GM12878 (cell line): ENCODE measurements at regions of chr15 and their contacts with region 1.

Region 1: GRCh38 chr15:55649054-55649423 is 60.9 kb upstream of the PYGO1 start:
- DNase-seq: no peak
- ATAC-seq: no peak
- H3K4me3 ChIP-seq: no peak overlapping the region
- H3K27ac ChIP-seq: no peak overlapping the region
- H3K4me1 ChIP-seq: no peaks in the 10 kb centered on the region
- H3K27me3 ChIP-seq: no peaks in the 10 kb centered on the region
- CTCF ChIP-seq: no peak
- EP300 ChIP-seq: no peak
- POLR2A ChIP-seq: no peak
- RAD21 ChIP-seq: no peak

Region 2: DNA sequence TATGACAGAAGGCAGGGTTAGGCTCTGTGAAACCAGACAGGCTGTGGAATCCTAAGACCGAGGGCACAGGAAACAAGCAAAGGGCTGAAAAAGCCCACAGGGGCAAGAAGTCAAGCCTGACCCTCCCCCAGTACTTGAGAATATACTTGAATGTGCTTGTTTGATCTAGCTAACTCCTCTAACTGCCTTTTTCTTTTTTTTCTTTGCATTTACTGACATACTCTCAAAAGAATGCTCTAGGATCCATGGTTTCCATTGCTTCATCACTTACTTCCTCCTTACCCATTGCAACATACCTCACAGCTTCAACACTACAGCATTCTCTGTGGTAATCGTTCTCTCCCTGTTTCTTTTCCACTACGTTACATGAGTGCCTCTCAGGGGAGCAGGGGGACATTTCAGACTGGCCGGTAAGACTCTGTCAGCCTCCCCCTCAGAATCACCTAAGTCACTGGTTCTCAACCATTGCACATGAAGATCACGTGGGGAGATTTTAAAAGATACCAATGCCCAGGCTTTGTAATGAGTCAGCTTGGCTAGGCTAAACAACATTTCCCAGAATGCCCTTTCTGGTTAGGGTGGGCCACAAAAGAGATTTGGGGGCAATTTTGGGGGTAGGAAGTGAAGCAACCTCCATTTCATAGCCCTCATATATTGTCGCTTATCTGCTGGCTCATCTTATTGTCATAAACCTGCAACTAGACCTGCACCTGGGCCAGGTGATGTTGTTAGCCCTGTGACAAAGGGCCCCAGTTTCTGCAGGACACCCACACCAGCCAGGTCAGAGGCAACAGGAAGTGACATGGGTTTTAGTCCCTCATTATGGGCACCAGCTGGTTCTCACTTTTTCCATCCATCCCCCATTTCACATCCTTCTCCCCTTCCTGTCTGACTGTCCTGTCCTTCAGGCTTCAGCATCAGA is 427.7 kb before region 1 on chr15:
- CTCF ChIA-PET with region 1: no interaction called
- POLR2A ChIA-PET with region 1: no interaction called
- RAD21 ChIA-PET with region 1: no interaction called
- SMC1A ChIA-PET with region 1: no interaction called
- in situ Hi-C with region 1: loop called (anchors 10 kb)
- intact Hi-C with region 1: no loop called
- DNase-seq: peak; percentile 52
- ATAC-seq: peak; percentile 71
- H3K4me3 ChIP-seq: no peak overlapping the region
- H3K27ac ChIP-seq: no peak overlapping the region; the same call in 1 of the 2 replicates
- H3K4me1 ChIP-seq: peaks cover 33% of the 10 kb centered on the region
- H3K27me3 ChIP-seq: no peaks in the 10 kb centered on the region
- CTCF ChIP-seq: no peak
- EP300 ChIP-seq: 0 out of 4 replicates have a peak, but pooled peaks of 1 of the 2 experiments have one; percentile 22
- POLR2A ChIP-seq: no peak
- RAD21 ChIP-seq: 0 out of 2 replicates have a peak, but pooled peaks have one; percentile 2

Region 3: DNA sequence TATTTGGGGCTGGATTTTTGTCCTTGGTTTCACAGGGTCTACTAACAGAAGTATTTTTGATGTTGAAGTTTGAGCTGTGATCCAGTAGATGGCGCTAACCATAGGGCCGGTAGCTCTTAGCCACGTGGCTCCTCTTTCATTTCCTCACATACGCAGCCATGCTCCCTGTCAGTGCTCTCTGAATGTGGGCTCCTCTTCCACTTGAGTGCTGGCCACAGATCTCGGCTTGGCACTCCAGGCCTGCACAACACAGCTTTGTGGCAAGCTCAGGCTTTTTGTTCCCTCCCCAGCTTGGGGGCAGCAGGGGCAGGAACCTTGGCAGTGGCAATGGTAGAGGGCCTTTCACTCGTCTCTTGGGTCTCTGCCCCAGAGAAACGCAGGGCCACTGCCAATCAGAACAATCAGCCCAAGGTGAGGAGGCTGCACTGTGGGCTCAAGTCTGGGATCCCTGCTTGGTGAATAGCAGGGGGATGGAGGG is 122.4 kb before region 1 on chr15:
- CTCF ChIA-PET with region 1: interaction called, 7 read pairs
- POLR2A ChIA-PET with region 1: no interaction called
- RAD21 ChIA-PET with region 1: no interaction called
- SMC1A ChIA-PET with region 1: interaction called, 3 read pairs
- in situ Hi-C with region 1: loop called (anchors 5 kb)
- intact Hi-C with region 1: no loop called
- DNase-seq: no peak
- ATAC-seq: peak; percentile 90
- H3K4me3 ChIP-seq: no peak overlapping the region
- H3K27ac ChIP-seq: no peak overlapping the region
- H3K4me1 ChIP-seq: no peaks in the 10 kb centered on the region
- H3K27me3 ChIP-seq: no peaks in the 10 kb centered on the region
- CTCF ChIP-seq: peak; percentile 50 to 61 (median 55)
- EP300 ChIP-seq: no peak
- POLR2A ChIP-seq: no peak
- RAD21 ChIP-seq: peak; percentile 50

Region 4: DNA sequence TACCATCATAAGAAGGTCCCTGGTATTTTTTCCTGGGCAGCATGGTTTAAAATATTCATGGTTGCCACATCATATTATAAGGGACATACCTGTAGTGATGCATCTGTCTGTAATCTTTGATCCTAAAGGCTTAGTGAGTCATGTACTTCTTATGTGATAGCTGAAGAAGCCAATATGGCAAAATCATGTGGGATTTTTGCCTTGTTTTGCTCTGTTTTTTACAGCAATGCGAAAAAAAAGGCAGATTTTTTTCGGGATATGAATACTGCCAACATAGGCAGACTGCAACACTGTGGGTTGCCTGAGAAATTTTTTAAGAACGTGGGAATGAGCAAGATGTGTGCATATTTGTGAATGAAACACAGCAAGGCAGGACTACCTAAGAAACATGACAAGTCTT is 49.6 kb before region 1 on chr15:
- CTCF ChIA-PET with region 1: no interaction called
- POLR2A ChIA-PET with region 1: no interaction called
- RAD21 ChIA-PET with region 1: no interaction called
- SMC1A ChIA-PET with region 1: no interaction called
- in situ Hi-C with region 1: no loop called
- intact Hi-C with region 1: no loop called
- DNase-seq: no peak
- ATAC-seq: no peak
- H3K4me3 ChIP-seq: no peak overlapping the region
- H3K27ac ChIP-seq: no peak overlapping the region
- H3K4me1 ChIP-seq: no peaks in the 10 kb centered on the region
- H3K27me3 ChIP-seq: no peaks in the 10 kb centered on the region
- CTCF ChIP-seq: no peak
- EP300 ChIP-seq: no peak
- POLR2A ChIP-seq: no peak
- RAD21 ChIP-seq: no peak

Region 5: GRCh38 chr15:55694652-55695150 is 45.7 kb after region 1 on chr15:
- CTCF ChIA-PET with region 1: no interaction called
- POLR2A ChIA-PET with region 1: no interaction called
- RAD21 ChIA-PET with region 1: no interaction called
- SMC1A ChIA-PET with region 1: no interaction called
- in situ Hi-C with region 1: no loop called
- intact Hi-C with region 1: no loop called
- DNase-seq: peak; percentile 48
- ATAC-seq: peak; percentile 87
- H3K4me3 ChIP-seq: no peak overlapping the region
- H3K27ac ChIP-seq: no peak overlapping the region
- H3K4me1 ChIP-seq: no peaks in the 10 kb centered on the region
- H3K27me3 ChIP-seq: no peaks in the 10 kb centered on the region
- CTCF ChIP-seq: no peak
- EP300 ChIP-seq: no peak
- POLR2A ChIP-seq: no peak
- RAD21 ChIP-seq: no peak

Region 6: DNA sequence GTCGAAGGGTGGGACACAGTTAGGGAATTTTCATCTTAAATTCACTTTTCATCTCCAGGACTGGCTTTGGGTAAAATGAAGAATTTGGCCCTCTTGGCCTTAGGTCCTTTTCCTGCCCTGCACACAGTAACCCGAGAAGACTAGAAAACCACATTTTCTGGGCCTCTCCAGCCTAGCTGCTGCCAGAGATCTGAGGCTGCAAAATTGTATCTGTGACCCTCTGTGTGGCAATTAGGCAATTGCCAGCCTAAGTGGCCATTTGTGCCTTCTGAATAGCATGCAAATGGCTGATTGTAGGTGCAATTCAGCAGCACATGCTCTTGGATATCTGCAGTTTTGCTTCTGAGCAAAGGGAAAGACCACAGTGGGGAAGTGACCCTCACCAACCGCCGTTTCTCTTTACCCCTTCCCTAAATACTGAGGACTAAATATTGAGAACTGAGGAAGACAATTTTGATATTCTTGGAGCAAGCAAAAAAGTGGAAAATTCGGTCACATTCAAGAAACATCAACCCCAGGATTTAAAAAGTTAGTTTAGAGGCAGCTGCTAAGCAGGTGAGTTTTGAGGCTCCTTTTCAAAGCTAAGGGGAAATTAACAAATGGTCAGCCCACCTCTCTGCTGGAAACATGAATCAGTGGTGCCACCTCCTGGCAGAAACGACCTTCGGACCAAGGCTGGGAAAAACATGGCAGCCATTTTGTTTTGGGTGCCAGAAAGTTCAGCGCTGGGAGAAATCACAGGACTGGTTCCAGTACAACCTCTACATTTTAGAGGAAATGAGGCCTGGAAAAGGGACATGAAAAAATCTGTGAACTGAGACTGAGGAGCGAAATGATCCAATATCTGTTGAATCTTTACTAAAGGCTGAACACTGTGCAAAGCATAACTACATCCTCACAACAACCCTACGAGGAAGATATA is 150.5 kb after region 1 on chr15:
- CTCF ChIA-PET with region 1: interaction called, 33 read pairs
- POLR2A ChIA-PET with region 1: no interaction called
- RAD21 ChIA-PET with region 1: no interaction called
- SMC1A ChIA-PET with region 1: interaction called, 3 read pairs
- in situ Hi-C with region 1: loop called (anchors 5 kb)
- intact Hi-C with region 1: loop called (anchors 1 kb)
- DNase-seq: peak; percentile 4
- ATAC-seq: peak; percentile 81
- H3K4me3 ChIP-seq: no peak overlapping the region
- H3K27ac ChIP-seq: no peak overlapping the region
- H3K4me1 ChIP-seq: no peaks in the 10 kb centered on the region
- H3K27me3 ChIP-seq: no peaks in the 10 kb centered on the region
- CTCF ChIP-seq: peak; percentile 50 to 69 (median 63)
- EP300 ChIP-seq: no peak
- POLR2A ChIP-seq: no peak
- RAD21 ChIP-seq: peak; percentile 77

Region 7: DNA sequence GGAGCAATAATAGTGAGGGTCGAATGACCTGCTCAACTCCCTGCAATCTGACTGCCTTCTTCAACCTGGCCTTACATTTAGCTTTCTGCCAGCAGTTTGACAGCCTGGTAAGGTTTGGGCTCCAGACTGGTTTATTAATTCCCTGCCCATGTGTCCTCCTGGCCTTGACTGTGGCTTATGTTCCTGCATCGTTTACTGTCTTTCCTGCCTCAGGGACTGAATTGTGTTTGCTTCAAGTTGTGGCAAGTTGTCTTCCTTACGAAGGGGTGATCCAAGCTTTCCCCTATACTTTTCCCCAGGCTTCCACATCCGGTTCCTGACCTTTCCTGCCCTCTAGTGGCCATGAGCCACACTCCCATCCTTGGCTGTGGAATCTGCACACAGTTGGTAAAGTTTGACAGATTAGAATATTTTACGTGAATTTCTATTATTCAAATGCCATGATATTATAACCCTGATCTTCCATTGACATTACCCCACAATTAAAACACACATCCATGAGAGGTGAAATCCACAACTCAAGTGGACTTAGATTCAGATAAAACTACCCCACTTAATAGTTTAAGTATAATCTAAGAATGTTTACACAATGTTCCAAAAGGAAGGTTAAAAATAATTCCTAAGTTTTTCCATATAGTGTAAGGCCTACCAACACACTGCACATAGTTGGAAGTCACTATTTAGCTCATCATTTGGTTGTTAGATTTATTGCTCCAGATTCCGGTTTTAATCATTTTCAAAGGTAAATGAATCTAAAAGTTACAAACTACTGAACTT is 248.7 kb after region 1 on chr15:
- CTCF ChIA-PET with region 1: interaction called, 3 read pairs
- POLR2A ChIA-PET with region 1: no interaction called
- RAD21 ChIA-PET with region 1: no interaction called
- SMC1A ChIA-PET with region 1: no interaction called
- in situ Hi-C with region 1: no loop called
- intact Hi-C with region 1: loop called (anchors 5 kb)
- DNase-seq: no peak
- ATAC-seq: peak; percentile 69
- H3K4me3 ChIP-seq: no peak overlapping the region
- H3K27ac ChIP-seq: no peak overlapping the region
- H3K4me1 ChIP-seq: peaks cover 8% of the 10 kb centered on the region; the same call in 1 of the 2 replicates
- H3K27me3 ChIP-seq: no peaks in the 10 kb centered on the region
- CTCF ChIP-seq: peak; percentile 70 to 88 (median 80)
- EP300 ChIP-seq: no peak
- POLR2A ChIP-seq: no peak
- RAD21 ChIP-seq: peak; percentile 56